Sigmoid colon (tissue), 7 donors: ENCODE measurements at regions of chr10 and their contacts with region 1.

Region 1: GRCh38 chr10:13299437-13300287 is at the start of gene PHYH:
- DNase-seq: peak; percentile 97
- H3K4me3 ChIP-seq: peak within 1 kb of the TSS; percentile 74 to 95 (median 90)
- H3K27ac ChIP-seq: peak within 1 kb of the TSS; percentile 100
- H3K4me1 ChIP-seq: peaks cover 0 to 35% (median 19%) of the 10 kb centered on the region in 4 donors
- H3K27me3 ChIP-seq: no peaks in the 10 kb centered on the region
- CTCF ChIP-seq: no peak
- EP300 ChIP-seq: peak in 1 of 4 donors; percentile 60
- POLR2A ChIP-seq: peak; percentile 50 to 70
- total RNA-seq, gene PHYH: 39.9 to 48.1 (median 41.6) TPM

Region 2: GRCh38 chr10:13276749-13277365 is 22.8 kb before region 1 on chr10:
- intact Hi-C with region 1: no loop called
- DNase-seq: no peak
- H3K4me3 ChIP-seq: no peak overlapping the region
- H3K27ac ChIP-seq: no peak overlapping the region
- H3K4me1 ChIP-seq: peaks cover 0 to 11% (median 3%) of the 10 kb centered on the region in 4 donors
- H3K27me3 ChIP-seq: no peaks in the 10 kb centered on the region
- CTCF ChIP-seq: no peak
- EP300 ChIP-seq: no peak
- POLR2A ChIP-seq: no peak

Region 3: GRCh38 chr10:13348216-13349017 is 48.8 kb after region 1 on chr10 and contains the start of gene SEPHS1:
- intact Hi-C with region 1: loop called (anchors 2 kb)
- DNase-seq: peak; percentile 84
- H3K4me3 ChIP-seq: peak within 1 kb of the TSS; percentile 69 to 91 (median 87)
- H3K27ac ChIP-seq: peak within 1 kb of the TSS; percentile 95 to 97 (median 96)
- H3K4me1 ChIP-seq: peaks cover 0 to 32% (median 28%) of the 10 kb centered on the region in 4 donors
- H3K27me3 ChIP-seq: peaks cover 0 to 18% (median under 1%) of the 10 kb centered on the region in 3 donors
- CTCF ChIP-seq: peak in 1 of 4 experiments; percentile 3
- EP300 ChIP-seq: no peak
- POLR2A ChIP-seq: no peak
- total RNA-seq, gene SEPHS1: 31.4 to 41.0 (median 37.6) TPM

Region 4: DNA sequence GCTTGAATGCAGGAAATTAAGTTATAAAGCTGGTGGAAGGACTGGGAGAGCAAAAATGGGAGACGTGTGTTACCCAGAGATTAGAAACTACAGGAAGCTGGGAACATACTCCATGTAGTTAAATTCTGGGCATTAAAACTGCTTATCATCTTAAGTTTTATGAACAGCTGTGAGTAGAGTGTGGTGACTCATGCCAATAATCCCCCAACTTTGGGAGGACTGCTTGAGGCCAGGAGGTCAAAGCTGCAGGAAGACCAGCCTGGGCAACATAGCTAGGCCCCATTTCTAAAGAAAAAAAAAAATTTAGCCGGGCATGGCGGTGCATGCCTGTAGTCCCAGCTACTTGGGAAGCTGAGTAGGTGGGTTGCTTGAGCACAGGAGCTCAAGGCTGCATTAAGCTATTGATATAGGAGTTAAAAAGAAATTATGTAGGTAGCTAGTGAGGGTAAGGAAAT is 104.7 kb after region 1 on chr10:
- intact Hi-C with region 1: no loop called
- DNase-seq: no peak
- H3K4me3 ChIP-seq: no peak overlapping the region
- H3K27ac ChIP-seq: no peak overlapping the region
- H3K4me1 ChIP-seq: no peaks in the 10 kb centered on the region
- H3K27me3 ChIP-seq: no peaks in the 10 kb centered on the region
- CTCF ChIP-seq: no peak
- EP300 ChIP-seq: no peak
- POLR2A ChIP-seq: no peak